ENCODE measurements at regions of chr1 and their contacts with region 1.

Region 1: GRCh38 chr1:192477630-192478029 is 97.9 kb upstream of the RGS1 start:
- DNase-seq: no peak
- H3K4me3 ChIP-seq: no peak overlapping the region
- CTCF ChIP-seq: peak; percentile 9

Region 2: GRCh38 chr1:192418552-192419285 is 58.9 kb before region 1 on chr1:
- in situ Hi-C with region 1: no loop called
- DNase-seq: no peak
- H3K4me3 ChIP-seq: no peak overlapping the region
- CTCF ChIP-seq: no peak

Region 3: GRCh38 chr1:192566657-192567056 is 89.0 kb after region 1 on chr1:
- in situ Hi-C with region 1: no loop called
- DNase-seq: no peak
- H3K4me3 ChIP-seq: no peak overlapping the region
- CTCF ChIP-seq: no peak

Region 4: GRCh38 chr1:192580351-192580962 is 102.8 kb after region 1 on chr1:
- in situ Hi-C with region 1: loop called (anchors 25 kb)
- DNase-seq: peak; percentile 55
- H3K4me3 ChIP-seq: no peak overlapping the region
- CTCF ChIP-seq: peak; percentile 71

Measured in astrocyte of the cerebellum (primary cell).